AG04449 (cell line): ENCODE measurements at regions of chr3 and their contacts with region 1.

Region 1: GRCh38 chr3:130892759-130893375 is 1.0 kb upstream of the ATP2C1 start:
- DNase-seq: no peak
- H3K4me3 ChIP-seq: peak overlapping the region; percentile 72
- CTCF ChIP-seq: peak; percentile 65

Region 2: DNA sequence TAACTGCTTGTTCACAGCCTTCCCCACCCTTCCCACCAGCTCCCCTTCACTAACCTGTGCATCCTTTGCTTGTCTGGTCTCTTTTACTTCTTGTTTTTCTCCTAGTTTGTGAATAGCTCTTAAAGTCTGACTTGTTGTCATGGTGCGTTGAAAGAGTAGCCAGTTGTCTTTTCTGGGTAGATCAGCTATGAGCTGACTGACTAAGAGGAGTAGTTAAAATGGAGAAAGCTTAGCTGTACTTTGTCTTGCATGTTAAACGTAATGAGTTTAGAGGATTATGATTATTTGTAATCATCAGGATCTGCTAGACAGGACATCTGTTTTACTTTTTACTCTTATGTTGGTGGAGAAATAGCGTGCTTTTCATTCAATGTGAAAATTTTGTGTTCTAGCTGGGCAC is 36.9 kb after region 1 on chr3:
- CTCF ChIA-PET with region 1: interaction called, 10 read pairs
- POLR2A ChIA-PET with region 1: interaction called, 3 read pairs
- DNase-seq: no peak
- H3K4me3 ChIP-seq: no peak overlapping the region
- CTCF ChIP-seq: no peak